ENCODE measurements at regions of chr20 and their contacts with region 1.

Region 1: GRCh38 chr20:50569864-50570836 is 60.0 kb downstream of the PTPN1 start:
- DNase-seq: peak; percentile 20
- ATAC-seq: peak; percentile 90
- H3K4me3 Mint-ChIP-seq: peak overlapping the region; percentile 46
- H3K27ac Mint-ChIP-seq: peak overlapping the region; percentile 87
- H3K4me1 Mint-ChIP-seq: peaks cover 70% of the 10 kb centered on the region
- H3K27me3 Mint-ChIP-seq: no peaks in the 10 kb centered on the region
- CTCF ChIP-seq: no peak

Region 2: DNA sequence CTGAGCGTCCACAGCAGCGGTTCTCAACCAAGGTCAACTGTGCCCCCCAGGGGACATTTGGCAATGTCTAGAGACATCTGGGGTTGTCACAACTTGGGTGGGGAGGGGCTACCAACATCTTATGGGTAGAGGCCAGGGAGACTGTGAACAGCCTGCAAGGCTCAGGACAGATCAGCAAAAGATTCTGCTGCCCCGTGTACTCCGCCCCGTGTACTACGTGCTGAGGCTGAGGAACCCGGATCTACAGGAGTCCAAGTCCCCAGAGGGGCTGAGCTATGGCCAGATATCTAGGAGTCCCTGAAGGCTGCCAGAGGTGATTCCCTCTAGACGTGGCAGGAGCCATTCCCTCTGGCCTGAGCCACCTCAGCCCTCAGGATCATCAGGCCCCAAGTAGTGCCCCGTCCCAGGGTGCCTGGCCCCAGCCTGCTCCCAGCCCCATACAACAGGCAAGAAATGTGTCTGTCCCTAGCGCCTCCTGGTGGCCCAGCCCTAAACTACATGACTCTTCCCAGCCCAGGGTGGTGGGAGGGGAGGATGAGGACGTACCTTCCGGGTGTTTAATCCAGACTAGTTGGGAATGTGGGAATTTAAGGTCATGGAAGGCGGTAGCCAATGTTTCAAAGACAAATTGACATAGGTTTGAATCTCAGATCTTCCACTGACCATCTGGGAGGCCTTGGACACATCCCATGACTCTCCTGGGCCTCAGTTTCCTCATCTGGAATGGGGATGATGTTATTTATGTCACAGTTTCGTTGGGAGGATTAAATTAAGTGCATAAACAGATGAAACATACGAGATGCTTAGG is 109.5 kb before region 1 on chr20:
- CTCF ChIA-PET with region 1: interaction called, 17 read pairs
- POLR2A ChIA-PET with region 1: no interaction called
- intact Hi-C with region 1: loop called (anchors 1 kb)
- DNase-seq: peak; percentile 69
- ATAC-seq: peak; percentile 86
- H3K4me3 Mint-ChIP-seq: no peak overlapping the region
- H3K27ac Mint-ChIP-seq: no peak overlapping the region
- H3K4me1 Mint-ChIP-seq: peaks cover 5% of the 10 kb centered on the region
- H3K27me3 Mint-ChIP-seq: peaks cover 24% of the 10 kb centered on the region
- CTCF ChIP-seq: peak; percentile 42

Region 3: DNA sequence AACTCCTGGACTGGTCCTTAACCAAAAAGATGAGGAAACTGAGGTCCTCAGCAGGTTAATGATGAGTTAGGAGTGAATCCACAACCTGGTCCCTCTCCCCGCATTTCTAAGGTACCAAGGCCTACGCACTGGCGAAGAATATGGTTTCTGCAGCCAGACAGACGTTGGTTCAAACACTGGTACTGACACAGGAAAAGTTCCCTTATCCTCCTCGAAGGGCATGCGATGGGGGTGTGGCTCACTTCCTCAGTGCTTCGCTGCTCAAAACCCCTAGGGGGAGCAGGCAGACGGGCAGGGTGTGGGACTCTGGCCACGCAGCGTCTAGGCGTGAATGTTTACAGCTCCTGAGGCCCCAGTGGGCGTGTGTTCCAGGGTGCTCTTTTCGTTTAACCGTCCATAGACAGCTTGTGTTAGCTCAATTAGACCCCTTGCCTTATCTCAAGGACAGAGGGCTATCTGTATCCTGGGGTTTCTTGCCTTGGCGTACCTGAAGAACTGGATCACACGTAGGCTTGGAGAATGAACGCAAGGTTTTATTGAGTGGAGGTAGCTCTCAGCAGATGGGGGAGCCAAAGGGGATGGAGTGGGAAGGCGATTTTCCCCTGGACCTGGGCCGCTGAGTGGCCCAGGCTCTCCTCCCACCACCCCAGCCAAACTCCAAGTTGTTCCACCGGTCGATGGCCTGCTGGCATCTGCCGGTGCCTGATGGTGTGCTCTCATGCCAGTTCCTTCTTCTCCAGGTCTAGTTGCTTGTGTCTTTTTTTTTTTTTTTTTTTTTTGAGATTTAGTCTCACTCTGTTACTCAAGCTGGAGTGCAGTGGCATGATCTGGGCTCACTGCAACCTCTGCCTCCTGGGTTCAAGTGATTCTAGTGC is 91.8 kb before region 1 on chr20:
- CTCF ChIA-PET with region 1: interaction called, 13 read pairs
- POLR2A ChIA-PET with region 1: interaction called, 5 read pairs
- intact Hi-C with region 1: loop called (anchors 1 kb)
- DNase-seq: peak; percentile 53
- ATAC-seq: peak; percentile 99
- H3K4me3 Mint-ChIP-seq: peak overlapping the region; percentile 1
- H3K27ac Mint-ChIP-seq: no peak overlapping the region
- H3K4me1 Mint-ChIP-seq: peaks cover 43% of the 10 kb centered on the region
- H3K27me3 Mint-ChIP-seq: no peaks in the 10 kb centered on the region
- CTCF ChIP-seq: peak; percentile 24

Region 4: GRCh38 chr20:50504231-50504823 is 65.8 kb before region 1 on chr20:
- CTCF ChIA-PET with region 1: interaction called, 154 read pairs
- POLR2A ChIA-PET with region 1: interaction called, 1,679 read pairs
- intact Hi-C with region 1: loop called (anchors 1 kb)
- DNase-seq: no peak
- ATAC-seq: peak; percentile 62
- H3K4me3 Mint-ChIP-seq: no peak overlapping the region
- H3K27ac Mint-ChIP-seq: peak overlapping the region; percentile 70
- H3K4me1 Mint-ChIP-seq: peaks cover 38% of the 10 kb centered on the region
- H3K27me3 Mint-ChIP-seq: no peaks in the 10 kb centered on the region
- CTCF ChIP-seq: no peak

Region 5: DNA sequence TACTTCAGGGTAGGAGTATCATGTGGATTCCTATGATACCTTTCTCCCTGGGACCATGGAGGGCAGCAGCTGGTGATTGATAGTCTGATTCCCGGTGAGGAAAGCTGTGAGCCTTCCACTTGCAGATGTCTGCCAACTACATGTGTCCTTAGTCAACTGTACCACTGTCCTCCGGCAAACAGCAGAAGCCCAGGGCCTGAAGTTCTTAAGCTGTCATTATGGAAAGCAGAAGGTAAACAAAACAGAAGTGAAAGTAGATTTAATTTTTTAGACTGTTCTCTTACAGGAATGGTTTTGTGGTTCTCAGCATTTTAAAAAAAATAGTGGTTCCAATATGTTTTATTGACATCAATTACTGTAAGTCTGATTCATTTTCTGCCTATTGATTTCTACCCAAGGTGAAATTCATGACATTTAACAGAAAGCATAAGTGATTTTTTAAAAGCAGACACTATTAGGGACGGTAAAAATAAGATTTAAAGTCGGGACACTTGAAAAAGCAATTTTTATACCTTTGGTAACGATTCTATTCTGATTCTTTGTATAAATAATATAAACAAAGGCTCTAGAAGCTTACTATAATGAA is 23.3 kb before region 1 on chr20:
- CTCF ChIA-PET with region 1: interaction called, 8 read pairs
- POLR2A ChIA-PET with region 1: interaction called, 27 read pairs
- intact Hi-C with region 1: no loop called
- DNase-seq: no peak
- ATAC-seq: peak; percentile 78
- H3K4me3 Mint-ChIP-seq: peak overlapping the region; percentile 79
- H3K27ac Mint-ChIP-seq: peak overlapping the region; percentile 85
- H3K4me1 Mint-ChIP-seq: peaks cover 75% of the 10 kb centered on the region
- H3K27me3 Mint-ChIP-seq: no peaks in the 10 kb centered on the region
- CTCF ChIP-seq: no peak

Measured in activated B cell treated with CpG ODN at 0.5 μM for 24 hours (primary cell).